GM18951 (cell line): ENCODE measurements at regions of chr3 and their contacts with region 1.

Region 1: DNA sequence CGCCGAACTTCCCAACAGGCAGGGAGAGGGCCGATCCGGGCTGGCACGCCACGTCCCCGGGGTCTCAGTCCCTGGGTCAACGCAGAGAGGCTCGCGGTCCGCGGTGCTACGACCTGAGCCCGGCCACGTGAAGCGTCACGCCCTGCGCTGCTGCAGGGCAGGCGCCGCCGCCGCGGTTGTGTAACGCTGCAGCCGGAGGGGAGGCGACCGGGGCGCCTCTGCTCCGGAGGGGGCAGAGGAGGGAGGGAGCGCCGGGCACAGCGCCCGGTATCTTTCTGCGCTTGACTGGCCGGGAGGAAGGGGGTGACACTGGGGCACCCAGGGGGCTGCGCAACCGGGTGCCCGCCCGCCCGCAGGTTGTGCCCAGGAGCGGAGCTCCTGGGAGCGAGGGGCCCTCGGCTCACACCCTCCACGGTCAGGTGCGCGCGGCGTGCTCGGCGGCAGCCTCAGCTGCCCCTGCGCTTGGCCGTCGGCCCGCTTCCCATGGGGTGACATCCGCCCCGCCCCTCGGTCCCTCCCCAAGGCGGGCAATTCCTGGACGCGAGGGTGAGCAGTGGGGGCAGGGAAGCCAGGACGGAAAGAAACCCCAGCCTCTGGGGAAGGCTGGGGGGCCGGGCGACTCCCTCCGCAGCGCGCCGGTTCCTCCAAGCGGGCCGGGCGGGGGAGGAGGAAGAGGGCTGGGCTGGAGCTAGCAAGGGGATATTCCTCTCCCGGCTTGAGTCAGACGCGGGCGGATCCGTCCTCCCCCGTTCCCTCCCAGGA is 852 bp upstream of the BHLHE40 start:
- POLR2A ChIP-seq: peak; percentile 88

Region 2: DNA sequence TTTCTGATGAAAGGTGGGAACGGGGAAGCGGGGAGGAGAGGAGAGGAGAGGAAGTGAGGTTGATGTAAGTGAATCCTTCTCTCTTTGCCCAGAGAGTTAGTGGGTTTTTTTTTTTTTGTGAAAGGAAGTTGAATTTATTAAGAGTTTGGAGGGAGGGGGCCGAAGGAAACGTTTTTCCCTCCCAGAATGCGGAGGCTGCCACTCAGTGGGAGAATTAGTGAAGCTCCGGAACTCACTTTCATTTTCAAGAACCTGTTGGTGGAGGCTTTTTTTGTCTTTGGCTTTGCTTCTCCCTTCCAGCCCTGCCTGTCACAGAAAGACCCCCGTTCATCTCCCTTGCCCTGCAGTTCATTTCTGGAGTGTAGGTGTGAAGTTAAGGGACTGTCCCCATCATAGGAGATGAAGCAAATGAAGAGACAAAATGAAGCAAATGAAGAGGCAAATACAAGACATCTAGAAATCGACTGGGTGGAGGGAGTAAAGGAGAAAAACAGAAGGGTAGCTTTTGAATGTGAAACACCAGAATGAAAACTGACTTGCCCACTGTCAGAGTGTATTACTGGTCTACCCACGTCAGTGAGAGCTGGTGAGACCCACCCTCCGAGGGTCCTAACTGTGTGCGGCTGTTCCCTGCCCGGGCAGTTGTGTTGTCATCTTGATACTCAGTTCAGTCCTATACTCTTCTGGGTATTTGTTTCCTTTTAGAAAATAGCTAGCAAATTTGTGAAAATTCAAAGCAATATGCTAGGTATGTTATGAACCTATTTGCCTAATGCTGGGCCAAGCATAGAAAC is 393.7 kb before region 1 on chr3:
- in situ Hi-C with region 1: no loop called
- POLR2A ChIP-seq: no peak

Region 3: GRCh38 chr3:4845882-4846281 is 132.5 kb before region 1 on chr3:
- in situ Hi-C with region 1: loop called (anchors 10 kb)
- POLR2A ChIP-seq: no peak